Naive thymus-derived CD4-positive, alpha-beta T cell (primary cell): ENCODE measurements at regions of chr20 and their contacts with region 1.

Region 1: GRCh38 chr20:6008254-6008653 is 45.6 kb downstream of the LRRN4 start:
- DNase-seq: no peak
- ATAC-seq: no peak
- H3K4me3 ChIP-seq: no peak overlapping the region
- H3K4me3 Mint-ChIP-seq: peak overlapping the region; percentile 58 to 99 (median 96)
- H3K27ac ChIP-seq: no peak overlapping the region
- H3K27ac Mint-ChIP-seq: peak overlapping the region in 8 of 9 donors; percentile 10 to 77 (median 39)
- H3K4me1 ChIP-seq: peaks cover 3 to 16% of the 10 kb centered on the region in 2 donors
- H3K4me1 Mint-ChIP-seq: peaks cover 30 to 68% (median 44%) of the 10 kb centered on the region in 7 donors
- H3K27me3 ChIP-seq: no peaks in the 10 kb centered on the region
- H3K27me3 Mint-ChIP-seq: no peaks in the 10 kb centered on the region

Region 2: GRCh38 chr20:5557123-5557522 is 451.1 kb before region 1 on chr20:
- CTCF ChIA-PET with region 1: no interaction called
- POLR2A ChIA-PET with region 1: no interaction called
- intact Hi-C with region 1: loop called (anchors 1 kb)
- DNase-seq: peak in 8 of 9 donors; percentile 24 to 63 (median 41)
- ATAC-seq: peak; percentile 77
- H3K4me3 ChIP-seq: no peak overlapping the region
- H3K4me3 Mint-ChIP-seq: no peak overlapping the region
- H3K27ac ChIP-seq: peak overlapping the region; percentile 11
- H3K27ac Mint-ChIP-seq: peak overlapping the region; percentile 1 to 74 (median 25)
- H3K4me1 ChIP-seq: no peaks in the 10 kb centered on the region
- H3K4me1 Mint-ChIP-seq: peaks cover 2 to 35% (median 13%) of the 10 kb centered on the region in 7 donors
- H3K27me3 ChIP-seq: no peaks in the 10 kb centered on the region
- H3K27me3 Mint-ChIP-seq: no peaks in the 10 kb centered on the region

Region 3: GRCh38 chr20:5950271-5951031 is 57.8 kb before region 1 on chr20 and contains the starts of genes MCM8 and TRMT6:
- CTCF ChIA-PET with region 1: no interaction called
- POLR2A ChIA-PET with region 1: no interaction called
- intact Hi-C with region 1: no loop called
- DNase-seq: peak; percentile 82 to 97 (median 95)
- ATAC-seq: peak; percentile 97
- H3K4me3 ChIP-seq: peak within 1 kb of the TSS; percentile 89
- H3K4me3 Mint-ChIP-seq: peak within 1 kb of the TSS; percentile 91 to 99 (median 96)
- H3K27ac ChIP-seq: peak within 1 kb of the TSS; percentile 82
- H3K27ac Mint-ChIP-seq: peak within 1 kb of the TSS; percentile 91 to 100 (median 97)
- H3K4me1 ChIP-seq: peaks cover 13 to 17% of the 10 kb centered on the region in 2 donors
- H3K4me1 Mint-ChIP-seq: peaks cover 7 to 61% (median 45%) of the 10 kb centered on the region in 7 donors
- H3K27me3 ChIP-seq: no peaks in the 10 kb centered on the region
- H3K27me3 Mint-ChIP-seq: peaks cover 0 to 4% (median 0%) of the 10 kb centered on the region in 5 donors
- total RNA-seq, gene MCM8: 2.6 to 22.7 (median 10.8) TPM
- total RNA-seq, gene TRMT6: 14.5 to 18.5 (median 17.8) TPM

Region 4: GRCh38 chr20:5969348-5969935 is 38.8 kb before region 1 on chr20:
- CTCF ChIA-PET with region 1: no interaction called
- POLR2A ChIA-PET with region 1: no interaction called
- intact Hi-C with region 1: no loop called
- DNase-seq: no peak
- ATAC-seq: no peak
- H3K4me3 ChIP-seq: no peak overlapping the region
- H3K4me3 Mint-ChIP-seq: no peak overlapping the region
- H3K27ac ChIP-seq: no peak overlapping the region
- H3K27ac Mint-ChIP-seq: no peak overlapping the region
- H3K4me1 ChIP-seq: no peaks in the 10 kb centered on the region
- H3K4me1 Mint-ChIP-seq: no peaks in the 10 kb centered on the region
- H3K27me3 ChIP-seq: no peaks in the 10 kb centered on the region
- H3K27me3 Mint-ChIP-seq: no peaks in the 10 kb centered on the region

Region 5: GRCh38 chr20:5989539-5989938 is 18.7 kb before region 1 on chr20:
- CTCF ChIA-PET with region 1: interaction called, 3 read pairs
- POLR2A ChIA-PET with region 1: interaction called, 3 read pairs
- intact Hi-C with region 1: loop called in 1 of 2 experiments (anchors 2 kb)
- DNase-seq: no peak
- ATAC-seq: no peak
- H3K4me3 ChIP-seq: no peak overlapping the region
- H3K4me3 Mint-ChIP-seq: no peak overlapping the region
- H3K27ac ChIP-seq: no peak overlapping the region
- H3K27ac Mint-ChIP-seq: peak overlapping the region in 1 of 9 donors; percentile 42
- H3K4me1 ChIP-seq: no peaks in the 10 kb centered on the region
- H3K4me1 Mint-ChIP-seq: peaks cover 0 to 12% (median 7%) of the 10 kb centered on the region in 7 donors
- H3K27me3 ChIP-seq: no peaks in the 10 kb centered on the region
- H3K27me3 Mint-ChIP-seq: no peaks in the 10 kb centered on the region

Region 6: GRCh38 chr20:6026051-6026450 is 17.8 kb after region 1 on chr20:
- CTCF ChIA-PET with region 1: no interaction called
- POLR2A ChIA-PET with region 1: interaction called, 3 read pairs
- intact Hi-C with region 1: loop called in 1 of 2 experiments (anchors 2 kb)
- DNase-seq: peak in 2 of 9 donors; percentile 33 to 48
- ATAC-seq: peak; percentile 36
- H3K4me3 ChIP-seq: no peak overlapping the region
- H3K4me3 Mint-ChIP-seq: peak overlapping the region in 2 of 10 donors; percentile 8 to 41
- H3K27ac ChIP-seq: no peak overlapping the region
- H3K27ac Mint-ChIP-seq: peak overlapping the region in 5 of 9 donors; percentile 5 to 73 (median 53)
- H3K4me1 ChIP-seq: peaks cover 0 to 18% of the 10 kb centered on the region in 2 donors
- H3K4me1 Mint-ChIP-seq: peaks cover 26 to 60% (median 47%) of the 10 kb centered on the region in 7 donors
- H3K27me3 ChIP-seq: no peaks in the 10 kb centered on the region
- H3K27me3 Mint-ChIP-seq: no peaks in the 10 kb centered on the region